Activated naive CD4-positive, alpha-beta T cell treated with anti-CD3 and anti-CD28 coated beads for 36 hours (primary cell): ENCODE measurements at regions of chr1 and their contacts with region 1.

Region 1: DNA sequence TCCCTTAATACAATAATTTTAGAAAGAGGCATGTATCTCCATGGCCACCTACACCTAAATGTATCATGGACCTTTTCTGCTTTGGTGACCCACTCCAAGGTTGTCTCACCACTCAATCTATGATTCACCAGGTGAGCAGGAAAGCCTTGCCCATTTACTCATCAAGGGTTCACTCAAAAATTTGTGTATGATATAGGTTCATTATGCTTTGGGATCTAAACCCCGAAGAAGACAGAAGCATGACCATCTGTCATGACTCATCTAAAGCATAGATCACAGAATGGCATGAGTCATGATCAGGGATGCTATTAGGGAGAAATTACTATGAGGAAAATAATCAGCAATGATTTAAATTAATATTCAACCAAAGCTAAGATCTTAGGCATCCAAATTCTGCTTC is 38.5 kb downstream of the PYHIN1 start:
- DNase-seq: peak; percentile 30
- H3K4me3 Mint-ChIP-seq: no peak overlapping the region
- H3K27ac Mint-ChIP-seq: peak overlapping the region; percentile 89
- H3K4me1 Mint-ChIP-seq: peaks cover 35% of the 10 kb centered on the region
- H3K27me3 Mint-ChIP-seq: peaks cover 5% of the 10 kb centered on the region

Region 2: DNA sequence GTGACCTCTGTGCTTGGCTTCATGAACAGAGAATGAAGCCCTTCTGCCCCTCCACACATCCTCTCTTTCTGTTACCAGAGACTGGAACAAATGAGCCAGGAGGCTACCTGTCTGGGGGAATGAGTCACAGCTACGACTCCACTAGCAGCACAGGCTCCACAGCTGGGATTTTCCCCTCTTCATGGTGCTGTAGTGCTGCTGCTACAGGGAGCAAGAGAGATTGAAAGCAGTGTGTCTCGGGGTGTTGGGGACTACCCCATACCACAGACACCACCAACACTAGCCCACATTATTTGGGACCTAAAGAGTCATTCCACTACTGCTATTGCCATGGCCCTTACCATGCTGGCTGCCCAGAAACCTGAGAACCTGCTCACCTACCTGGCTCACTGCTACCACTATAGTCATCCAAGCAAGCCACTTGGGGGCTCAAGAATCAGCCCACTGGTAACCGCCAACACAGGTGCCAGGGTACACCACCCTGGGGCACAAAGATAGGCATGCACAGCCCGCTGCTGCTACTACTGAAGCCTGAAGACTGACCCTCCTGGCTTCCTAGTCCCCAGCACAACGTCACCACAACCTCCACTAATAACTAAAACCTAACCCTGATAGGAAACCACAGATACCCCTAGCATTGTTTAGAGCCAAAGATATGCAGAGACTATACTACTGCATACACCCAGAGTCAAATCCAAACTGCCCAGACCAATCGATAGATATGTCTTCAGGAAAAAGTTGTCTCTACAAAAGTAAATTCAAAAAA is 598.5 kb before region 1 on chr1:
- CTCF ChIA-PET with region 1: no interaction called
- intact Hi-C with region 1: loop called (anchors 10 kb)
- DNase-seq: peak; percentile 63
- H3K4me3 Mint-ChIP-seq: no peak overlapping the region
- H3K27ac Mint-ChIP-seq: no peak overlapping the region
- H3K4me1 Mint-ChIP-seq: peaks cover 2% of the 10 kb centered on the region
- H3K27me3 Mint-ChIP-seq: peaks cover 24% of the 10 kb centered on the region

Region 3: DNA sequence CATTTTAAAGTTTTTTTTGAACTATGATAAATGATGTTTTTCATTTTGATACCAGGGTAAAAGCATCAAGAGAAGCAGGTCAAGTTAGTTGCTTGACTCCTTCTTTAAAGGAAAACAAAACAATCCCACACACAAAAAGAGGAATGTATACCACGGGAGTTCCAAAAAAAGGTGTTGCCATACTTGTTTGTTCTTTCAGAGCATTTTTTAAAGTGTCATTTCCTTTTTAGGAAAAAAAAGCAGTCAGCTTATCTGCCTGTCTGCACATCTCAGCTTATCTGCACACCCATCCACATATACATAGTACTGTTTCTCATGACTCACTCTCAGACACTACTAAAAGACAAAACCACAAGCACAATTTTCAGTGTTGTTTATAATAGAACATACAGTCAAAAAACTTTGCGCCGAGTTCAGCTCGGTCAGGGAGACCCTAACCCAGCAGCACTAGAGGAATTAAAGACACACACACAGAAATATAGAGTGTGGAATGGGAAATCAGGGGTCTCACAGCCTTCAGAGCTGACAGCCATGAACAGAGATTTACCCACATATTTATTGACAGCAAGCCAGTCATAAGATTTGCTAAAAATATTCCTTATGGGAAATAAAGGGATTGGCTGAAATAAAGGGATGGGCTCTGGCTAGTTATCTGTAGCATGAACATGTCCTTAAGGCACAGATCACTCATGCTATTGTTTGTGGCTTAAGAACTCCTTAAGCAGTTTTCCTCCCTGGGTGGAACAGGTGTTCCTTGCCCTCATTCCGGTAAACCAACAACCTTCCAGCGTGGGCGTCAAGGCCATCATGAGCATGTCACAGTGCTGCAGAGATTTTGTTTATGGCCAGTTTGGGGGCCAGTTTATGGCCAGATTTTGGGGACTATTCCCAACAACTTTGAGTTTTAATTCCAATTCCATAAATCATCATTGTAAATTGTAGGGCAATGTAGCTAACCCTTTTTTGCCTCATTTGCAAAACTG is 150.1 kb before region 1 on chr1:
- CTCF ChIA-PET with region 1: no interaction called
- intact Hi-C with region 1: loop called (anchors 1 kb)
- DNase-seq: peak; percentile 7
- H3K4me3 Mint-ChIP-seq: no peak overlapping the region
- H3K27ac Mint-ChIP-seq: no peak overlapping the region
- H3K4me1 Mint-ChIP-seq: peaks cover 12% of the 10 kb centered on the region
- H3K27me3 Mint-ChIP-seq: peaks cover 15% of the 10 kb centered on the region

Region 4: DNA sequence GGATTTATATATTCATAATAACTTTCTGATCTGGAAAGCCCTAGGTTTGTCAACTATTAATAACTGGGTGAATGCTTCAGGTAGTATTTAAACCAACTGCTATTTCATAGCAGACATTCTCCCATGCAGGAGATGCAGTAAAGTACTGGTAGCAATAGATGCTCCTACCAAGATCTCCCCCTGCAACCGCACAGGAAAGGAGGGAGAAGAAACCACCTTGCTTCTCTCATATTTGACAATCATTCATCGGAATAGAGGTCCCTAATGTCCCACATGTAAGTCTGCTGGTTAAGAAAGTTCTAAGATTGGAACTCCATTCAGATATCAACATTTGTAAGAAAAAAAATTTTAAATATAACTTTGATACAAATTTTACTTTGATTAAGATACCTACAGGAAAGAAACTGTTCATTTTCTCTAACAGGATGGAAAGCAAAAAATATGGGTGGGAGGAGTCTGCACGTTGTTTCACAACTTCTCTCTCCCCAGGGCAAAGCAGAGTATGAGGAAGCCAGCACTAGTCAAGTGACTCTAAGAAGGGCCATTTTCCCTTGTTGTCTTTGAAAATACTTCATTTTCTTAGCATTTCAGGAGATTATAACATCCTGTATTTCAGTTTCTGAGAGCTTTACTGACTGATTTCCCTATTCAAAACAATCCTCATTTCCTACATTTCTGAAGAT is 38.7 kb before region 1 on chr1 and contains the start of gene PYHIN1:
- CTCF ChIA-PET with region 1: no interaction called
- intact Hi-C with region 1: loop called (anchors 1 kb)
- DNase-seq: peak; percentile 37
- H3K4me3 Mint-ChIP-seq: peak within 1 kb of the TSS; percentile 75
- H3K27ac Mint-ChIP-seq: peak within 1 kb of the TSS; percentile 86
- H3K4me1 Mint-ChIP-seq: peaks cover 35% of the 10 kb centered on the region
- H3K27me3 Mint-ChIP-seq: peaks cover 6% of the 10 kb centered on the region
- total RNA-seq, gene PYHIN1: 4.1 to 4.4 TPM

Region 5: GRCh38 chr1:159040206-159040605 is 70.4 kb after region 1 on chr1:
- CTCF ChIA-PET with region 1: no interaction called
- intact Hi-C with region 1: loop called (anchors 2 kb)
- DNase-seq: no peak
- H3K4me3 Mint-ChIP-seq: no peak overlapping the region
- H3K27ac Mint-ChIP-seq: no peak overlapping the region
- H3K4me1 Mint-ChIP-seq: peaks cover 53% of the 10 kb centered on the region
- H3K27me3 Mint-ChIP-seq: no peaks in the 10 kb centered on the region